ENCODE measurements at regions of chr2 and their contacts with region 1.

Region 1: DNA sequence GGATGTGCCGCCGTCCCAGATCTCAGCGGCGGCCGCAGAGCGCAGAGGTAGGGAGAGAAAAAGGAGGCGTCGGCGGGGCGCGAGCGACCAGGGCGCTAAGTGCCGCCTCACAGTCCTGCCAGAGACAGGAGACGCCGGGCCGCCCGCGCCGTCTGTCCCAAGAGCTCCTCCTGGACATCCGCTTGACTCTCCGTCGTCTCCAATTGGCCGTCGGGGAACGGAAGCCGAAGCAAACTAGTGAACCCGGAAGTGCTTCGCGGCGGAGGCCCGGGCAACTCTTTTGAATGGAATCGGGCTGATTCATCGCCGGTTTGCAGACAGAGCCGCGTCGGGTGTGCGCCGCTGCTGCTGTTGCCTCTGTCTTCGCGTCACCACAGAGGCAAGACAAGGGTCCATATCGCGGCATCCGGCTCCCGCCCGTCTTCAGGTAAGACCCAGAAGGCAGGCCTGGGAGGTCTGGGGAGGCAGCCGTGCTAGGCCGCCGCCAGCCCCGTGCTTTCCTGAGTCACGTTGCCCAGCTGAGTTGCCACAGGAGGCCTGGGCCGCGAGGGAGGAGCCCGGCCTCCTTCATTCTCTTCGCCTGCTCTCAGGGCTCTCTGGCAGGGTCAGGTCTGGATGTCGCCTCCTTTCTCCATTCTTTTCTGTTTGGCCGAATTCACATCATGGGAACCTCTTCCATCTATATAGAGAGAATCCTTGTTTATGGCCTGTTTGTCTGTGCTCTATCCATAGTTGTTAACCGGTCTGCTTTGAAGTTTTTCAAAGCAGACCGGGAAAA is at the start of gene PSMD14:
- DNase-seq: peak; percentile 74 to 94 (median 83)
- ATAC-seq: peak; percentile 91
- H3K4me3 ChIP-seq: peak within 1 kb of the TSS; percentile 81
- H3K4me3 Mint-ChIP-seq: peak within 1 kb of the TSS; percentile 98
- H3K27ac ChIP-seq: peak within 1 kb of the TSS; percentile 59 to 78
- H3K27ac Mint-ChIP-seq: peak within 1 kb of the TSS; percentile 93
- H3K4me1 ChIP-seq: peaks cover 5% of the 10 kb centered on the region
- H3K4me1 Mint-ChIP-seq: peaks cover 48% of the 10 kb centered on the region
- H3K27me3 ChIP-seq: no peaks in the 10 kb centered on the region
- H3K27me3 Mint-ChIP-seq: no peaks in the 10 kb centered on the region
- CTCF ChIP-seq: no peak
- total RNA-seq, gene PSMD14: 17.1 to 22.1 TPM

Region 2: DNA sequence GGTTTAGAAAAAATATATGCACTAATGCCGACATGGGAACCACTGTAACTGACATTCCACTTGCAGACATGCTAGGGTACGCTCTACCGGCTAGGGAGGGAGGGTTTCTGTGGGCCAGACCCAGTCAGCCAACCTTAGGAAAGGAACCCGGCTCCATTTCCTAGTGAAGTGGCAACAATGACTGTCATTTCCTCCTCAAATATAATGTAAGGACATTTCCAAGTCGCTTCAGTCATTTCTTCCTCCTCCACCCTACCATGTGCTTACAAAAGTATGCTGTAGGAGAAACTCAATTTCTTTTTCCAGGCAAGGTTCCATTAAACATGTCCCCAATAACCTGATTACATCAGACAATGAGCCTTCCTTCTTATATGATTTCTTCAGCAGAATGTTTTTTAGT is 64.5 kb before region 1 on chr2:
- CTCF ChIA-PET with region 1: no interaction called
- POLR2A ChIA-PET with region 1: interaction called, 3 read pairs
- intact Hi-C with region 1: loop called in 1 of 2 experiments (anchors 2 kb)
- DNase-seq: peak in 4 of 14 experiments; percentile 20 to 39 (median 28)
- ATAC-seq: no peak
- H3K4me3 ChIP-seq: peak overlapping the region; percentile 52
- H3K4me3 Mint-ChIP-seq: peak overlapping the region; percentile 86
- H3K27ac ChIP-seq: peak overlapping the region; percentile 25 to 54
- H3K27ac Mint-ChIP-seq: peak overlapping the region; percentile 84
- H3K4me1 ChIP-seq: peaks cover 23% of the 10 kb centered on the region
- H3K4me1 Mint-ChIP-seq: peaks cover 72% of the 10 kb centered on the region
- H3K27me3 ChIP-seq: no peaks in the 10 kb centered on the region
- H3K27me3 Mint-ChIP-seq: no peaks in the 10 kb centered on the region
- CTCF ChIP-seq: no peak

Region 3: DNA sequence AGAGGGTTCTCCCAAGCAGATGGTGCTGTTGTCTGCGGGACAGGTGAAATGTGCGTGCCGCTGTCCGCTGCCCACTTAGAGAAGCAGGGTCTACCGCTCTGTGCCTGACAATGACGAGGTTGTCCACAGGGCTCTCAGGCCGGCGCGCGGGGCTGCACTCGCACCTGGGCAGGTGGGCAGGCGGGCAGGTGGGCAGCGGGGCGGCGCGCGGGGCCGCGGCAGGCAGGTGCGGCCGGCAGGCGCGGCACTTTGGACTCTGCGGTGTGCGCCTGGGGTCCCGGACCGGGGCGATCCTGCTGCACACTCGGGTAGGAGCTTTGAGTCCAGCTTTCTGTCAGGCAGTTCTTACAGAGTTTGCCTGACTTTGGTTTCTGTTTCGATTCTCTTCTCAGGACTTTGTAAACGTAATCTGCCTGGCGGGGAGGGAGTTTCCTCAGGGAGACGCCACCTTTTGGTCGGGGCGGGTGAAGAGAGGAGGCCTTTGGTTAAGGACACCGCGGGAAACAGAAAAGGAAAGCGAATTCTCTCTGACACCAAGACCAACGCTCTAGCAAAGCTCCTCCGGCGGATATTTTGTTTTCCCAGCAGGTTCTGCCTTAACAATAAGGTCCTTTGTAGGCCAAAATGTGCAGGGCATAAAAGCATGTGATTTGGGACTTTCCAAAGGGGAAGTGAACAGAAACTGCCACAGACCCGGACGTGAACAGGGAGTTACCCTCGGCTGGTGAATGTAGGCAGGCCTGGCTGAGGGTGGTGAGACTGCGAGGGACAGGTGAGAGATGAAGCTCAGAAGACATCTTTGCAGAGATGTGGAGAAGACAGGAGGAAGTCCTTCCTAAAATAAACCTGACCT is 1010.2 kb after region 1 on chr2 and contains the start of gene IFIH1:
- CTCF ChIA-PET with region 1: no interaction called
- POLR2A ChIA-PET with region 1: no interaction called
- intact Hi-C with region 1: loop called in 1 of 2 experiments (anchors 5 kb)
- DNase-seq: peak; percentile 42 to 95 (median 63)
- ATAC-seq: peak; percentile 85
- H3K4me3 ChIP-seq: peak within 1 kb of the TSS; percentile 90
- H3K4me3 Mint-ChIP-seq: peak within 1 kb of the TSS; percentile 98
- H3K27ac ChIP-seq: peak within 1 kb of the TSS; percentile 91 to 97
- H3K27ac Mint-ChIP-seq: peak within 1 kb of the TSS; percentile 99
- H3K4me1 ChIP-seq: peaks cover 29% of the 10 kb centered on the region
- H3K4me1 Mint-ChIP-seq: peaks cover 75% of the 10 kb centered on the region
- H3K27me3 ChIP-seq: no peaks in the 10 kb centered on the region
- H3K27me3 Mint-ChIP-seq: no peaks in the 10 kb centered on the region
- CTCF ChIP-seq: no peak
- total RNA-seq, gene IFIH1: 31.1 to 32.1 TPM

Region 4: GRCh38 chr2:162343824-162344616 is 1035.7 kb after region 1 on chr2 and contains the start of gene GCA:
- CTCF ChIA-PET with region 1: no interaction called
- POLR2A ChIA-PET with region 1: no interaction called
- intact Hi-C with region 1: loop called in 1 of 2 experiments (anchors 10 kb)
- DNase-seq: peak; percentile 93 to 99 (median 98)
- ATAC-seq: peak; percentile 96
- H3K4me3 ChIP-seq: peak within 1 kb of the TSS; percentile 64
- H3K4me3 Mint-ChIP-seq: peak within 1 kb of the TSS; percentile 82
- H3K27ac ChIP-seq: no peak within 1 kb of the TSS
- H3K27ac Mint-ChIP-seq: peak within 1 kb of the TSS; percentile 83
- H3K4me1 ChIP-seq: peaks cover 12% of the 10 kb centered on the region
- H3K4me1 Mint-ChIP-seq: peaks cover 19% of the 10 kb centered on the region
- H3K27me3 ChIP-seq: no peaks in the 10 kb centered on the region
- H3K27me3 Mint-ChIP-seq: no peaks in the 10 kb centered on the region
- CTCF ChIP-seq: no peak
- total RNA-seq, gene GCA: 3.9 to 5.0 TPM

Measured in CD4-positive, alpha-beta T cell (primary cell).